Activated naive CD4-positive, alpha-beta T cell treated with anti-CD3 and anti-CD28 coated beads, Interleukin-2, amount 10 ng/mL, durations not matched to agents 7 days and 5 days (primary cell): ENCODE measurements at regions of chr17 and their contacts with region 1.

Region 1: DNA sequence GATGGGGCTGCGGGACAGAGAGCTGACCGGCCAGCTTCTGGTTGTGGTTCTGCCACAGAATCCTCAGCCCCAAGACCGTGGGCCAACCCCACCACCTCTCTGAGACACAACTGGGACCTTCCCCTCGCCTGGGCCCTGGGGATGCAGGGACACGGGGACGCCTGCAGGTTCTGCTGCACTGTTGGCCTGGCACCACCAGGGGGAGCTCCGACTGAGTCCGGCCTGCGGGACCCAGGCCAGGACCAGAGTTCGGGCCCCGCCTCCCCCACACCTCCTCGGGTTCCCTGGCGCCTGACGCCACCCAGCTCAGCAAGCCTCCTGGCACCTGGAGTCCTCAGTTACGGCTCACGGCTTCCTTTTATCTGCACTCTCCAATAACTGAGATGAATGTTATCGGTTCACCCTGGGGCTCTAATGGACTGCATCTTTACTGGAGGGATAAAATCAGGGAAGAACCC is 27.3 kb downstream of the TBC1D16 start:
- DNase-seq: peak; percentile 84
- H3K4me3 Mint-ChIP-seq: no peak overlapping the region
- H3K27ac Mint-ChIP-seq: no peak overlapping the region
- H3K4me1 Mint-ChIP-seq: peaks cover 4% of the 10 kb centered on the region
- H3K27me3 Mint-ChIP-seq: peaks cover 28% of the 10 kb centered on the region

Region 2: DNA sequence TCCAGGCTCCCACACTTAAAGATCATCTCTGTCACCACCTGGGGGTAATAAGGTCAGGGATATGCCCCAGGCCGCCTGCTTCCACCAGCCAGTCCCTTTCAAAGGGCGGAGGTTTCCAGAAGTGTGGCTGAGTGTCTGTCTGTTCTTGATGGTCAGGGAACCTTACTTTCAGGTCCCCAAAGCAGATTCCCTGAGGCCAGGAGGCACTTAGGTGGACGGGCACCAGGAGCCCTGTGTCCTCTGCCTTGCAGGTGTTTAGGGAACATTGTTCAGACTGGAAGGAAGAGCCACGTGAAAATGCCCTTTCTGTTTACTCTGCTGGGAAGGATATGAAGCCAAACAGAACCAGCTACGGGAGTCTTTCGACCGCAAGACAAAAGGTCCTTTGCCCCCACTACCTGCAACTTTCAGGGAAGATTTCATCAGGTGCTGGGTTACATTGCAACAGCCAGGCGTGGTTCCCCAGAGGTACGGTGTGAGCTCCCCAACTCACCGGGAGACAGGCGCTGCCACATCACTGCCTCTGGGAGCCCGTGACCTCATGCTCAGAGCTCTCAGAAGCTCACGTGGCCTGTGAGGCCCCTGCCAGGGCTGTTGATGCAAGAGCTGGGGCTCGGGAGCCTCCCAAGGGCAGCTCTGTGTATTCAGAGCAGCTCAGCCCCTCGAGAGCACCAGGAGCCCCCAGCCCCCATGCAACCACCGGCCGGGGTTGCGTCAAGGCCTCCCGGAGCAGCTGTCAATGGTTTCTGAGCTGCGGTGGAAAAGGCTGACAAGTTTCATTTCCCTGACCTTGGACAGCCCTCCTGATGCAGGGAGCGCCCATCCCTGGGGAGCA is 15.0 kb before region 1 on chr17:
- CTCF ChIA-PET with region 1: interaction called, 21 read pairs
- DNase-seq: peak; percentile 70
- H3K4me3 Mint-ChIP-seq: no peak overlapping the region
- H3K27ac Mint-ChIP-seq: peak overlapping the region; percentile 69
- H3K4me1 Mint-ChIP-seq: peaks cover 62% of the 10 kb centered on the region
- H3K27me3 Mint-ChIP-seq: peaks cover 31% of the 10 kb centered on the region

Region 3: DNA sequence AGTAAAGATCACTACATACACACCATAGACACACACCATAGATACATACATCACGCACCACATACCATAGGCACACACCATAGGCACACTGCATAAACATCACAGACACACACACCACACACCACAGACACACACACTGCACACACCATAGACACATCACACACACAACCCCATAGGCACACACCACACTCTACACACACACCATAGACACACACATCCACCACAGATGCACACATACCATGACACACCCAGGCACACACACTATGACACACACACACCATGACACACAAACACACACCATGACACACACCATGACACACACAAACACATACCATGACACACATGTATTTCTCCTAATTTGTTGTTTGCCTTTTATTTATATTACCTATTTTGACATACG is 13.2 kb after region 1 on chr17:
- CTCF ChIA-PET with region 1: interaction called, 10 read pairs
- DNase-seq: no peak
- H3K4me3 Mint-ChIP-seq: no peak overlapping the region
- H3K27ac Mint-ChIP-seq: no peak overlapping the region
- H3K4me1 Mint-ChIP-seq: no peaks in the 10 kb centered on the region
- H3K27me3 Mint-ChIP-seq: no peaks in the 10 kb centered on the region